IMR-90 (cell line): ENCODE measurements at regions of chr1 and their contacts with region 1.

Region 1: DNA sequence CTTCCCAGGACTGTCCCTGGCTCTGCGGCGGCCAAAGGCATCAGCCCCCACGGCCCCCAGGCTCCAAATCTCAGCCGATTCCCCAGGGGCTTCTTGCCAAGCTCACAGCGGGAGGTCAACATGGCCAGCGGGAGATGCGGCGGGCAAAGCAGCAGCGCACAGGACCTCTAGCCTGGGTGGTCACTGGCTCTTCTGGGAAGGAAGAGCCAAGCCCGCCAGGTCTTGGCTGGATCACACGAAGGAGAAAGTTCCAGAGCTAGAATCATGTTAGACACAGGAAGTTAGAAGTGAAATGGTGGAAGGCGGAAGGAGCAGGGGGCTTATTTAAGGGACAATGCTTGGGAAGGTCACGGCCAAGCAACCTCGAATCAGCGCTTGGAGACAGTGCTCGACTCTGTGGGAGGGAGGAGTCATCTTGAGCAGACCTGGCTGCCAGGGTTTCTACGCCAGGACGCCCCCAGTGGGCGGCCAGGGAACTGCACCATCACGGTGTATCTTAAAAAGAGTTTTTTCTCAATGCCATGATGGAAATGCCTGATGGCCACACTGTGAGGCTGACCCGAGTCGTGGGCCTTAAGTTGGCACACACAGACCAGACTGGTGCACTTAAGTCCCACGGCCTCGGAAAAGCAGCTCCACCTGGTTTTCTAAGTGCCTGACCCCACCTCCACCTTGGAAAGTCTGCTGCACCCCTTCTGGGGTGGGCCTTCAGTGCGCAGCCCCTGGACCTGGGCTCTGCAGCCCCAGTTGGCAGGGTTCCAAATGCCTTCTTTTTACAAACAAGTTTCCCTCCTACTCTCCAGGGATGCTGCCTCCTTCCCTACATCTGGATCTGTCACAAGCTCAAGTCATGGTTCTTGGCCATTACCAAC is 29.3 kb downstream of the SLC66A1 start:
- DNase-seq: peak; percentile 65
- ATAC-seq: peak; percentile 87
- H3K4me3 ChIP-seq: no peak overlapping the region
- H3K27ac ChIP-seq: no peak overlapping the region
- H3K4me1 ChIP-seq: no peaks in the 10 kb centered on the region
- H3K27me3 ChIP-seq: no peaks in the 10 kb centered on the region
- CTCF ChIP-seq: peak; percentile 85
- POLR2A ChIP-seq: no peak
- RAD21 ChIP-seq: peak; percentile 61

Region 2: GRCh38 chr1:19468397-19468956 is 127.0 kb after region 1 on chr1:
- CTCF ChIA-PET with region 1: no interaction called
- POLR2A ChIA-PET with region 1: no interaction called
- dilution Hi-C with region 1: no loop called
- in situ Hi-C with region 1: no loop called
- intact Hi-C with region 1: loop called (anchors 5 kb)
- DNase-seq: no peak
- ATAC-seq: peak; percentile 27; the same call in 1 of the 2 replicates
- H3K4me3 ChIP-seq: no peak overlapping the region
- H3K27ac ChIP-seq: peak overlapping the region; percentile 55
- H3K4me1 ChIP-seq: peaks cover 30% of the 10 kb centered on the region
- H3K27me3 ChIP-seq: no peaks in the 10 kb centered on the region
- CTCF ChIP-seq: no peak
- POLR2A ChIP-seq: no peak
- RAD21 ChIP-seq: no peak

Region 3: GRCh38 chr1:19651141-19651737 is 309.8 kb after region 1 on chr1:
- CTCF ChIA-PET with region 1: interaction called, 6 read pairs
- POLR2A ChIA-PET with region 1: no interaction called
- dilution Hi-C with region 1: no loop called
- in situ Hi-C with region 1: loop called (anchors 5 kb)
- intact Hi-C with region 1: loop called (anchors 1 kb)
- DNase-seq: peak; percentile 47
- ATAC-seq: peak; percentile 88
- H3K4me3 ChIP-seq: no peak overlapping the region
- H3K27ac ChIP-seq: no peak overlapping the region
- H3K4me1 ChIP-seq: peaks cover 12% of the 10 kb centered on the region; the same call in 1 of the 2 replicates
- H3K27me3 ChIP-seq: no peaks in the 10 kb centered on the region
- CTCF ChIP-seq: peak; percentile 84
- POLR2A ChIP-seq: no peak
- RAD21 ChIP-seq: peak; percentile 91

Region 4: DNA sequence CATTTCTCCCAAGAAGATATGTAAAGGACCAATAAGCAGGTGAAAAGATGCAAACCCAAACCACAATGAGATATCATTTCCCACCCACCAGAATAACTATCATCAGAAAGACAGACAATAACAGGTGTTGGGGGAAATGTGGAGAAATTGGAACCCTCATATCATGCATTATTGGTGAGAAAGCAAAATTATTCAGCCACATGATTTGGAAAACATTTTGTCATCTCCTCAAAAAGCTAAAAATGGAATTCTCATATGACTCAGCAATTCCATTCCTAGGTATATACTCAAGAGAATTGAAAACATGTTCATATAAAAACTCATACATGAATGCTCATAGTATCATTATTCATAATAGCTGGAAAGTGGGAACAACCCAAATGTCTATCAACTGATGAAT is 498.8 kb after region 1 on chr1:
- CTCF ChIA-PET with region 1: no interaction called
- POLR2A ChIA-PET with region 1: no interaction called
- dilution Hi-C with region 1: no loop called
- in situ Hi-C with region 1: no loop called
- intact Hi-C with region 1: no loop called
- DNase-seq: peak; percentile 12
- ATAC-seq: no peak
- H3K4me3 ChIP-seq: no peak overlapping the region
- H3K27ac ChIP-seq: no peak overlapping the region
- H3K4me1 ChIP-seq: no peaks in the 10 kb centered on the region
- H3K27me3 ChIP-seq: peaks cover 4% of the 10 kb centered on the region
- CTCF ChIP-seq: no peak
- POLR2A ChIP-seq: no peak
- RAD21 ChIP-seq: no peak